Caco-2 (cell line): ENCODE measurements at regions of chr11 and their contacts with region 1.

Region 1: GRCh38 chr11:9774591-9775397 is 110.9 kb downstream of the SWAP70 start:
- DNase-seq: no peak
- H3K4me3 ChIP-seq: no peak overlapping the region
- H3K4me3 Mint-ChIP-seq: no peak overlapping the region
- H3K27ac Mint-ChIP-seq: no peak overlapping the region
- H3K4me1 ChIP-seq: peaks cover 33% of the 10 kb centered on the region
- H3K4me1 Mint-ChIP-seq: peaks cover 14% of the 10 kb centered on the region
- H3K27me3 ChIP-seq: no peaks in the 10 kb centered on the region
- H3K27me3 Mint-ChIP-seq: no peaks in the 10 kb centered on the region
- CTCF ChIP-seq: no peak

Region 2: GRCh38 chr11:10122326-10123197 is 347.8 kb after region 1 on chr11:
- CTCF ChIA-PET with region 1: no interaction called
- POLR2A ChIA-PET with region 1: no interaction called
- intact Hi-C with region 1: loop called (anchors 10 kb)
- DNase-seq: no peak
- H3K4me3 ChIP-seq: no peak overlapping the region
- H3K4me3 Mint-ChIP-seq: no peak overlapping the region
- H3K27ac Mint-ChIP-seq: no peak overlapping the region
- H3K4me1 ChIP-seq: peaks cover 5% of the 10 kb centered on the region
- H3K4me1 Mint-ChIP-seq: peaks cover 7% of the 10 kb centered on the region
- H3K27me3 ChIP-seq: no peaks in the 10 kb centered on the region
- H3K27me3 Mint-ChIP-seq: no peaks in the 10 kb centered on the region
- CTCF ChIP-seq: no peak